ENCODE measurements at regions of chr7 and their contacts with region 1.

Region 1: DNA sequence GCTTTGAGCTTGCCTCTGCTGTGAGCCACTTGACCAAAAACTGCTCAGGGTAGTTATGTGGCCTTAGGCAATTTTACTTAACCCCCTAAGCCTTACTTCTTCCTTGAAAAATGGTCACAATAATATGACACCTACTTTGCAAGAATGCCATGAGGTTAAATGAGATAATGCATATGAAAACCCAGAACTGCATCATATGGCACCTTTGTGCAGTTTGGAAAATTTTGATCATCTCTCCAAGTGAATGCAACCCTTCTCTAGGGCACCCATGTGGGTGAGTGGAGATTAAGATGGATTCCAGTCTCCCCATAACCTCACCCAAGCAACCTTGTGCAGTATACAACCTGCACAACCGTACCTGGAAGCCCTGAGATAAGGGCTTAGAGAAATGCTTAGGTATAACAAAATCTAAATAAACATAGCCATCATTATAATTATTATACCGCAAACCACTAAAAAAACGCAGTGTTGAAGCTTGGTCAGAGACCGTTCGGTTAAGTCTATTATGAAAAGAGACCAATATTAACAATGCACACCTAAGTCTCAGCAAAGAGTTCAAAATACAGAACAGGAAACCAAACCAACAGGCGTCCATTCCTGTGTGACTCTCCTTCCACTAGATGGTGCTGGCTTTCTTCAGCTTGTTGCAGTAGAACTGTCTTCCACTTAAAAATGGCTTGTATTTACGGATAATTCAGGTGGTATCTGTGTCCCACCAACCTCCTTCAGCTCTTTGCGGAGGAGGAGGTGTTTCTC is 21.0 kb upstream of the ASB15 start:
- DNase-seq: no peak
- ATAC-seq: peak; percentile 85 to 91
- H3K4me3 ChIP-seq: peak overlapping the region in 1 of 4 donors; percentile 29
- H3K27ac ChIP-seq: peak overlapping the region; percentile 11 to 71 (median 44)
- H3K4me1 ChIP-seq: peaks cover 14 to 29% of the 10 kb centered on the region in 2 donors
- H3K27me3 ChIP-seq: no peaks in the 10 kb centered on the region
- CTCF ChIP-seq: peak; percentile 45 to 80 (median 54)
- POLR2A ChIP-seq: no peak

Region 2: DNA sequence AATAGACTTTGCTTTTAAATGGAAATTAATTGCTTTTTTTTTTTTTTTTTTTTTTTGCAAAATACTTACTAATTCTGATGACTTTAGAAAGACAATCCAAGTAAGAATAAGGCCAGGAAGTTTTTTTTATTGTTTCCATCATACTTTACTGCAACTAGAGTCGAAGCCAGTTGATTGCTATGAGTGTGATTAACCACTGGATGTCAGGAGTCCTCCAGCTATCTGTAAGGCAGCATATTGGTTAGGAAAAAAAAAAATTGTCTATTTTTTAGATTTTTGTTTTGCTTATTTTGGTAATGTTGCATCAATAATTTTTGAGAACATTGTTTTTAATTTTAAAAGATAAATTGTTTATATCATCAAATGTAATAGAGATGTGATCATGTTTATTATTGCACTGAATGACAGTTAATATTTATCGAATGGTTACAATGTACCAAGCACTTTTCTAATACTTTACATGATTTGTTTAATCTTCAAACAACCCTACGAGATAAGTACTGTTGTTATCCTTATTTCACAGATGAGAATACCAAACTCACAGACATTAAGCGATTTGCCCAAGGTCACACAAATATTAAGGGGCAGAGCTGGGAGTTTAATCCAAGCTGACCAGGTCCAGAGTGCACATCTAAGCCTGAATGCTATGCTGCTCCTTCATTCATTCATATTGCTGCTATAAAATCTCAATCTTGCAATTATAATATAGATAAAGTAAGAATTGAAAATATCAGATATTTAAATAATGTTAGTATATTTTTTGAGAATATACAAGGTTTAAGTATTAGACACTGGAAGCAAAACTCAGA is 55.2 kb after region 1 on chr7:
- in situ Hi-C with region 1: no loop called
- intact Hi-C with region 1: loop called (anchors 1 kb)
- DNase-seq: no peak
- ATAC-seq: peak; percentile 57 to 71
- H3K4me3 ChIP-seq: no peak overlapping the region
- H3K27ac ChIP-seq: peak overlapping the region in 3 of 4 donors; percentile 67 to 83 (median 79)
- H3K4me1 ChIP-seq: peaks cover 49 to 52% of the 10 kb centered on the region in 2 donors
- H3K27me3 ChIP-seq: no peaks in the 10 kb centered on the region
- CTCF ChIP-seq: peak; percentile 25 to 69 (median 54)
- POLR2A ChIP-seq: no peak

Region 3: GRCh38 chr7:123682690-123683089 is 102.1 kb after region 1 on chr7:
- in situ Hi-C with region 1: no loop called
- intact Hi-C with region 1: loop called (anchors 5 kb)
- DNase-seq: no peak
- ATAC-seq: no peak
- H3K4me3 ChIP-seq: no peak overlapping the region
- H3K27ac ChIP-seq: peak overlapping the region in 3 of 4 donors; percentile 75 to 85 (median 82)
- H3K4me1 ChIP-seq: peaks cover 47% of the 10 kb centered on the region in 2 donors
- H3K27me3 ChIP-seq: no peaks in the 10 kb centered on the region
- CTCF ChIP-seq: peak; percentile 35 to 59 (median 45)
- POLR2A ChIP-seq: no peak

Region 4: DNA sequence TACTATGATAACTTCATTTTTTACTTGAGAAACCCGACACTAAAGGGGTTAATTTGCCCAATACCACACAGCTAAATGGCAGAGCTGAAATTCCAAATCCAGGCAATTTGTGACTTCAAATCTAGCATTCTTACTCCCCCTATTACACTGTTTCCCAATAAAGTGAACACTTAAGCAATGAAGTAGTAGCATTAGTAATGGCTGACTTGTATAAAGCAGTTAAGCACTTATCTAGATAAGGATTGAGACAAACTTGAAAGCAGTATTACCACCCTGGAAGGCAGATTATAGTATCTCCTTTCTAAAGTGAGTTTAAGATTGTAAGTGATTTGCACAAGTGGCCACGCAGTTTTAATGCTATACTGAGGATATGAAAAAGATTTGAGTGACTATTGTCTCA is 128.9 kb after region 1 on chr7:
- in situ Hi-C with region 1: loop called in 3 of 4 experiments (anchors 5 to 10 kb)
- intact Hi-C with region 1: no loop called
- DNase-seq: no peak
- ATAC-seq: no peak
- H3K4me3 ChIP-seq: no peak overlapping the region
- H3K27ac ChIP-seq: no peak overlapping the region
- H3K4me1 ChIP-seq: peaks cover 23 to 28% of the 10 kb centered on the region in 2 donors
- H3K27me3 ChIP-seq: no peaks in the 10 kb centered on the region
- CTCF ChIP-seq: no peak
- POLR2A ChIP-seq: no peak

Region 5: GRCh38 chr7:123871998-123872867 is 291.6 kb after region 1 on chr7:
- in situ Hi-C with region 1: loop called in 3 of 4 experiments (anchors 10 to 25 kb)
- intact Hi-C with region 1: loop called (anchors 5 kb)
- DNase-seq: peak; percentile 19 to 41
- ATAC-seq: peak; percentile 89 to 90
- H3K4me3 ChIP-seq: no peak overlapping the region
- H3K27ac ChIP-seq: peak overlapping the region in 1 of 4 donors; percentile 63
- H3K4me1 ChIP-seq: peaks cover 9 to 14% of the 10 kb centered on the region in 2 donors
- H3K27me3 ChIP-seq: no peaks in the 10 kb centered on the region
- CTCF ChIP-seq: peak; percentile 21 to 56 (median 48)
- POLR2A ChIP-seq: no peak